Psoas muscle (tissue), 8 donors: ENCODE measurements at regions of chr18 and their contacts with region 1.

Region 1: DNA sequence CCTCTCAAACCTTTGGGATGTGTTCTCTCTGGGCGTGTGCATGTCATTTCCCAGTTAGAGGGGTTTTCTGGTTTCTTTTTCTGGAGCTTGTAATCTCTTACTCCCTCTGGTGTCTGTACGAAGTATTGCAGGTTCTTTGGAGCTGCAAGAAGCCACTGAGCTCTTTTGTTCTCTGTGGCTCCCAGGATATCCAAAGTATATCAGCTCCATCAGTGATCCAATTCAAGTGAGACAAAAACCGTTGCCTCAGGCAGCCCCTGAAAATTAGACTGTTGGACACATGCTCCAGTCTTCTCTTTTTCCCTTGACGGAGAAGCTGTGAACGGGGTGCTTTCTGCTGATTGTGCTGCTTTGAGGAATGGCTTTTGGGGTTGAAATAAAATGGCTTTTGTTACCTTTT is 59.0 kb upstream of the LDLRAD4 start:
- DNase-seq: no peak
- ATAC-seq: peak; percentile 47 to 62 (median 58)
- H3K4me3 ChIP-seq: no peak overlapping the region
- H3K27ac ChIP-seq: no peak overlapping the region
- H3K4me1 ChIP-seq: no peaks in the 10 kb centered on the region
- H3K27me3 ChIP-seq: no peaks in the 10 kb centered on the region
- CTCF ChIP-seq: peak; percentile 81

Region 2: GRCh38 chr18:12726774-12727550 is 432.6 kb before region 1 on chr18:
- intact Hi-C with region 1: loop called in 1 of 2 experiments (anchors 10 kb)
- DNase-seq: no peak
- ATAC-seq: peak; percentile 62 to 83 (median 72)
- H3K4me3 ChIP-seq: no peak overlapping the region
- H3K27ac ChIP-seq: no peak overlapping the region
- H3K4me1 ChIP-seq: no peaks in the 10 kb centered on the region
- H3K27me3 ChIP-seq: no peaks in the 10 kb centered on the region
- CTCF ChIP-seq: peak; percentile 94

Region 3: DNA sequence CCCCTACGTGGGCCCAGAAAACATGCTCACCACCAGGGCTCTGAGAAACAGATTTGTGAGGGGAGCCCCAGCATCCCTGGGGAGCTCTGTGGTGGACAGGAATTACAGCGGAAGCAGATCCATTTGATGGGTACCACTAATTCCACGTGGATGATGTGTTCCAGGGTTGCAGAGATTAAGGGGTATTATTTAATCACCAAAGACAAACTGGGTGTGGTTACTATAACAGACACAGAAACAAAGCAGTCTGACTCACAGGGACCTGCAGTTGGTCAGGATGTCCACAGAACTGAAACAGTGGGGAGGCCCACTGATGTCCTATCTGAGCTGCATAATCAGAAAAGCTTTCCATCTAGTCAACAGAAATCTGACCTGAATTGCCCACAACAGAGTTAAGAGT is 391.0 kb before region 1 on chr18:
- intact Hi-C with region 1: no loop called
- DNase-seq: no peak
- ATAC-seq: no peak
- H3K4me3 ChIP-seq: no peak overlapping the region
- H3K27ac ChIP-seq: no peak overlapping the region
- H3K4me1 ChIP-seq: no peaks in the 10 kb centered on the region
- H3K27me3 ChIP-seq: no peaks in the 10 kb centered on the region
- CTCF ChIP-seq: no peak

Region 4: GRCh38 chr18:13112982-13113381 is 46.6 kb before region 1 on chr18:
- intact Hi-C with region 1: loop called in 1 of 2 experiments (anchors 2 kb)
- DNase-seq: peak in 1 of 2 donors; percentile 36
- ATAC-seq: peak; percentile 51 to 73 (median 60)
- H3K4me3 ChIP-seq: no peak overlapping the region
- H3K27ac ChIP-seq: no peak overlapping the region
- H3K4me1 ChIP-seq: no peaks in the 10 kb centered on the region
- H3K27me3 ChIP-seq: no peaks in the 10 kb centered on the region
- CTCF ChIP-seq: peak; percentile 25

Region 5: DNA sequence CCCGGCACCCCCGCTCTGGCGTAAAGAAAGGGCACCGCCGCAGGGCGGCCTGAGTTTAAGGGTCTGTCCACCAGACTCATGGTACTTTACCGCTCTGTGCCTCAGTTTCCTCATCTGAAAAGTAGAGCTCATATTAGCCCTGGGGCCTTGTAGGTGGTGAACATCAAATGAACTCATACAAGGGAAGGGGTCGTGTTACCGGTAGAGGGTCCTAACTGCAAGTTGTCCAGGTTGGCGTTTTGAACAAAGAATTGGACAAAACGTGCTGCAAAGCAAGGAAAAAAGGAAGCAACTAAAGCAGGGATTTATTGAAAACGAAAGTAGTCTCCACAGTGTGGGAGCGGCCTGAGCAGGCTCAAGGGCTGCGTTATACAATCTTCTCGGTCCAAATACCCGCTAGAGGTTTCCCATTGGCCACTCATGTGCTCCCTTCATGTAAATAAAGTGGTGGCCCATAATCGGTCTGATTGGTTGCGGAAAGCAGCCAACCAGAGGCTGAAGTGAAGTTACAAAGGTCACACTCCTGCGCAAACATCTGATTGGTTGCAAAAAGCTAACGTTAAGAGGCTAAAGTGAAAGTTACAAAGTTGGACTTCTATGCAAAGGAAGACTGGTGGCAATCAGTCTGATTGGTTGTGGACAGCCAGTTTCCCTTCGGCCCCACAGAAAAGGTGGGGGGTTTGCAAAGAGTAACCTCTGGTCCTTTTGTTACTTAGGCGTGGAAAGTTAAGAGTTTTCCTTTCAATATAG is 21.7 kb before region 1 on chr18:
- intact Hi-C with region 1: no loop called
- DNase-seq: peak in 1 of 2 donors; percentile 59
- ATAC-seq: peak; percentile 70 to 87 (median 78)
- H3K4me3 ChIP-seq: peak overlapping the region; percentile 78
- H3K27ac ChIP-seq: peak overlapping the region; percentile 67
- H3K4me1 ChIP-seq: no peaks in the 10 kb centered on the region
- H3K27me3 ChIP-seq: peaks cover 0 to 5% (median 0%) of the 10 kb centered on the region in 3 donors
- CTCF ChIP-seq: no peak